HCT116 (cell line): ENCODE measurements at regions of chr12 and their contacts with region 1.

Region 1: DNA sequence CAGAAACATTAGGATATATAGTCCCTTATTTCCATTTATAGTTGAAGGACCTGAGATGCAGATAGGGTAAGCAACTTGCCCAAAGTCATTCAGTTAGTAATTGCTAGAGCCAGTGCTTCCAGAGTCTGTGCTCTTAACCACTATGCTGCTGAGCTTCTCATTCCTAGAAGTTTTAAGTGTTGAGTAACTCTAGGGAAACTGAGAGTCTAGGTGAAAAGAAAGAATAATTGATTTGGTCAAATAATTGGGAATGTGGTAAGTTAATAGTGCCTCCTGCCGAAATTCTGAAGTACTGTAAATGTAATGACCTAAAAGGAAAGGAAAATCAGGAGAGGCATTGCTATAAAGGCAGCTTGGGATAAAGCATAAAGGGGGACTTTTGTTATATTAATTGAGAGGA is 14.1 kb downstream of the PYROXD1 start:
- DNase-seq: no peak
- ATAC-seq: peak; percentile 46; the same call in 1 of the 2 replicates
- H3K4me3 ChIP-seq: no peak overlapping the region
- H3K27ac ChIP-seq: no peak overlapping the region
- H3K4me1 ChIP-seq: 0 out of 4 replicates have a peak, but pooled peaks cover 0 to 2% of the 10 kb centered on the region in 2 experiments
- H3K27me3 ChIP-seq: no peaks in the 10 kb centered on the region
- CTCF ChIP-seq: peak; percentile 16 to 56 (median 27); a peak in 4 of 6 replicates
- POLR2A ChIP-seq: no peak
- RAD21 ChIP-seq: peak; percentile 33; the same call in 1 of the 2 replicates

Region 2: DNA sequence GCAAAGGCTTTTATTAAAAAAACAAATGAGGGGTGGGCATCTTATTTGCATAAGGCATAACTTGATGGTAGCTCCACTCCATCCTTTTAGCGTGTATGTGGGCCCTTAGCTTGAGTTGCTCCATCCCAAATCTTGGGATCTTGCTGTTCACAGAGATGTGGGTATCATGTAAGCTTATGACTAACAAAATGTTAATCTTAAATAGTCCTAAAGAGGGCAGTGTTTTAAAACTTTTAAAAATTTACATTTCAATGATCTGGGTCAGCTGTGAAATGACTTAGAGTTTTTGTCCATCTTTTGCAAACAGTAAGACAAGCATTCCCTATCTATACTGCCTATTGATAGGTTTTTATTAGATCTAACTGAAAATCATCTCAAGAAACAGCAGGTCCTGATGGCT is 202.8 kb before region 1 on chr12:
- CTCF ChIA-PET with region 1: interaction called, 9 read pairs
- POLR2A ChIA-PET with region 1: no interaction called
- RAD21 ChIA-PET with region 1: no interaction called
- intact Hi-C with region 1: loop called (anchors 5 kb)
- DNase-seq: no peak
- ATAC-seq: peak; percentile 71
- H3K4me3 ChIP-seq: no peak overlapping the region
- H3K27ac ChIP-seq: no peak overlapping the region
- H3K4me1 ChIP-seq: no peaks in the 10 kb centered on the region
- H3K27me3 ChIP-seq: no peaks in the 10 kb centered on the region
- CTCF ChIP-seq: peak; percentile 12 to 46 (median 17); a peak in 2 of 6 replicates
- POLR2A ChIP-seq: no peak
- RAD21 ChIP-seq: peak; percentile 35